ENCODE measurements at regions of chr18 and their contacts with region 1.

Region 1: DNA sequence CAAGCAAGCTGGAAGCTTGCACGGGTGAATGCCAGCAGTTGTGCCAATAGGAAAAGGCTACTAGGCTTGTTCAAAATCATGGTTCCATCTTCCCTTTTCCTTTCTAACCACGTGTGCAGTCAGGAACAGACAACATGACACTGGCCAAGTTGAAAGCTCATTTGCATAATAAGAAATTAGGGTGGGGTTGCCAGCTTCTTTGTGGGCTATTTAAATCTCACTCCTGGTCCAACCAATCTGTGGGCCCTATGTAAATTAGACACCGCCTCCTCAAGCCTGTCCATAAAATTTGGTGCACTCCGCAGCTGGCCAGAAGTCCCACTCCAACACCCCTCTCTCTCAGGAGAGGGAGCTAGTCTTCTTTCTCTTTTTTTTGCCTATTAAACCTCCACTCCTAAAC is 1948.4 kb upstream of the PIK3C3 start:
- DNase-seq: no peak
- H3K4me3 ChIP-seq: no peak overlapping the region
- H3K27ac ChIP-seq: no peak overlapping the region
- H3K4me1 ChIP-seq: no peaks in the 10 kb centered on the region
- CTCF ChIP-seq: no peak

Region 2: GRCh38 chr18:39946623-39947061 is 60.0 kb before region 1 on chr18:
- CTCF ChIA-PET with region 1: no interaction called
- POLR2A ChIA-PET with region 1: no interaction called
- intact Hi-C with region 1: loop called (anchors 2 kb)
- DNase-seq: no peak
- H3K4me3 ChIP-seq: no peak overlapping the region
- H3K27ac ChIP-seq: no peak overlapping the region
- H3K4me1 ChIP-seq: no peaks in the 10 kb centered on the region
- CTCF ChIP-seq: no peak

Region 3: GRCh38 chr18:40019797-40020392 is 13.3 kb after region 1 on chr18:
- CTCF ChIA-PET with region 1: no interaction called
- POLR2A ChIA-PET with region 1: no interaction called
- intact Hi-C with region 1: no loop called
- DNase-seq: no peak
- H3K4me3 ChIP-seq: no peak overlapping the region
- H3K27ac ChIP-seq: no peak overlapping the region
- H3K4me1 ChIP-seq: no peaks in the 10 kb centered on the region
- CTCF ChIP-seq: no peak